Heart right ventricle (tissue), 16 donors: ENCODE measurements at regions of chr19 and their contacts with region 1.

Region 1: DNA sequence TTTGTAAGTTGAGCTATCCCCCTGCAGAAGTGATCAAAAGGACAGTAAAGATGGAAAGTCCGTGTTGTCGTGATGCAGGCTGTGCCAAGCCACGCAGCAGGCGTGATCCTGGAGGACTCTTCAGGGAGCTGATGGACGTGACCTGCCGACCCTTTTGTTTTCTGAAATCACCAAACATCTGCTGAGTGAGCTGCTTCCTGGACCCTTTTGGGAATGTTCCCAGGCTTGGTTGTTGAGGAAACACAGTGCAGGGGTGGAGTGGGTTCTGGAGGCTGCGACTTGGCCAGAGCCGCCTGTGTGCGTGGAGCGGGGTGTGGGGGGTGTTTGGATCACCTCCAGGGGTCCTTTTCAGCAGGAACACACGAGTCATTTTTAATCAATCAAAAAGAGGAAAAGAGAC is 15.4 kb upstream of the CPAMD8 start:
- DNase-seq: peak; percentile 54 to 70
- ATAC-seq: peak; percentile 73 to 95 (median 91)
- H3K4me3 ChIP-seq: no peak overlapping the region
- H3K27ac ChIP-seq: peak overlapping the region in 8 of 10 donors; percentile 34 to 75 (median 58)
- H3K4me1 ChIP-seq: peaks cover 0 to 16% (median 0%) of the 10 kb centered on the region in 9 donors
- H3K27me3 ChIP-seq: peaks cover 0 to 21% (median 7%) of the 10 kb centered on the region in 7 donors
- CTCF ChIP-seq: no peak

Region 2: DNA sequence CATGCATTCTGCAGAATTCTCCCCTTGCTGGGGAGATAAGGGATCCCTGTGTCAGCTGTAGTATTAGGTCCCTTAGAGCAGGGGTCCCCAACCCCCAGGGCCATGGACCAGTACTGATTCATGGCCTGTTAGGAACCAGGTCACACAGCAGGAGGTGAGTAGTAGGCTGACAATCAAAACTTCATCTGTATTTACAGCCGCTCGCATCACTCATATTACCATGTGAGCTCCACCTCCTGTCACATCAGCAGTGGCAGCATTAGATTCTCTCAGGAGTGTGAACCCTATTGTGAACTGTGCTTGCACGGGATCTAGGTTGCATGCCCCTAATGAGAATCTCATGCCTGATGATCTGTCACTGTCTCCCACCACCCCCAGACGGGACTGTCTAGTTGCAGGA is 53.3 kb before region 1 on chr19:
- intact Hi-C with region 1: loop called in 1 of 10 experiments (anchors 2 kb)
- DNase-seq: no peak
- ATAC-seq: no peak
- H3K4me3 ChIP-seq: no peak overlapping the region
- H3K27ac ChIP-seq: no peak overlapping the region
- H3K4me1 ChIP-seq: peaks cover 0 to 10% (median 0%) of the 10 kb centered on the region in 9 donors
- H3K27me3 ChIP-seq: no peaks in the 10 kb centered on the region
- CTCF ChIP-seq: no peak